Aorta (tissue), 5 donors: ENCODE measurements at regions of chr1 and their contacts with region 1.

Region 1: DNA sequence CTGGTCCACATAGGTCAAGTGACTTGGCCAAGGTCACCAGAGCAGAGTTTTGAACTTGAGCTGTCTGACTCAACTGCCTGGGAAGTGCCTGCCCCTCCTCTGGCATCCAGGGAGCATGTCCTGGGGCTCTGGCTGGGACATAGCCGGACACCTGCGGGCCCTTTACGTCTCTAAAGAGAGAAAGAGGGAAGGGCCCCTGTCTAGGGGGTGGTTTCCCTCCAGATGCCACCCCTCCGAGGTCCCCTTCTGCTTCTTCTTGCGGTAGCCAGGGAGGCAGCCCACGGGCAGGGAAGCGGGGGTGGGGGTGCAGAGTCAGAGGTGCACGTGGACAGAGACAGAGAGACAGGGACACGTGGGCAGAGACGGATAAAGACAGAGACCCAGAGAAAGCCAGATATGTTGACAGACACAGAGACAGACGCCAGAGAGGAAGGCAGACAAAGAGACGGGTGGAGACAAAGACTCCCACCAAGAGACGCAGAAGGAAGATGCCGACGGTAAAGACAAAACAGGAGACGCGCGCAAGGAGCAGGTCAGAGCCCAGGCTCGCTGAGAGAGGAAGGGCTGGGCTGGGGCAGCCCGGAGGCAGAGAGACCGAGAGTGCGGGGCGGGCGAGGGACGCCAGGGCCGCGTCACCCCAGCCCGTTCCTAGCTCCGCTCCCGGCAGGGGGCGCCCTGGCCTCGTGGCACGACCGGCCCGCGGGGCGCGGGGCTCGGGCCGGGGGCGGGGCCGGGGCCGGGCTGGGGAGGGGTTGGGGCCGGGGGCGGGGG is 458 bp upstream of the ALPL start:
- DNase-seq: peak; percentile 66 to 90
- ATAC-seq: peak; percentile 83
- H3K4me3 ChIP-seq: no peak overlapping the region
- H3K27ac ChIP-seq: no peak overlapping the region
- H3K4me1 ChIP-seq: no peaks in the 10 kb centered on the region
- H3K27me3 ChIP-seq: no peaks in the 10 kb centered on the region

Region 2: DNA sequence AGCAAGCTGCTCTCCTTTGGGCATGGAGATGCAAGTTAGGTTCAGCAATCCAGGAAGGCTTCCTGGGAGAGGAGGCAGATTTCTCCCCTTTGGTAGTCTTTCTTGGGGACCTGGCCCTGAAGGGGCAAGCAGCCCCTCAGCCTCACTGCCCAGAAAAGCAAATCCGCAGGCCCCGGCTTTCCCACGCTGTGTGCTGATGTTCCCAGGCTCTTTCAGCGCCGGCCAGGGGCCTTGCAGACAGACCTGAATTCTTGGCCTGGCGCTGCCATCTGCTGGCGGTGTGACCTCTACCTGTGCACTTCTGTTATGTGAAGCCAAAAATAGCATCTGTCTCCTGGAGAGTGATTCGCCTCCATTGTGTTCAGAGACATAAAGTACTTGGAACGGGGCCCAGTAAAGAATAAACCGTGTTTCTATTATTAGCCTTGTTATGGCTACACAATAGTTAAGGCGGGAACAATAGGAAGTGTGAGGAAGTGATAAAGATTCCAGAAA is 65.3 kb after region 1 on chr1:
- intact Hi-C with region 1: loop called in 1 of 2 experiments (anchors 5 kb)
- DNase-seq: peak; percentile 68 to 87
- ATAC-seq: peak; percentile 73
- H3K4me3 ChIP-seq: no peak overlapping the region
- H3K27ac ChIP-seq: no peak overlapping the region
- H3K4me1 ChIP-seq: no peaks in the 10 kb centered on the region
- H3K27me3 ChIP-seq: no peaks in the 10 kb centered on the region

Region 3: GRCh38 chr1:21659099-21659923 is 150.5 kb after region 1 on chr1:
- intact Hi-C with region 1: loop called in 1 of 2 experiments (anchors 5 kb)
- DNase-seq: peak; percentile 71 to 91
- ATAC-seq: peak; percentile 84
- H3K4me3 ChIP-seq: no peak overlapping the region
- H3K27ac ChIP-seq: no peak overlapping the region
- H3K4me1 ChIP-seq: no peaks in the 10 kb centered on the region
- H3K27me3 ChIP-seq: no peaks in the 10 kb centered on the region